Dendritic cell treated with granulocyte-macrophage colony-stimulating factor and Interleukin-4, amounts not matched to agents 40 ng/mL and 50 ng/mL, for 4 days (primary cell): ENCODE measurements at regions of chr11 and their contacts with region 1.

Region 1: GRCh38 chr11:57530596-57531507 is at the start of gene TIMM10:
- H3K4me3 Mint-ChIP-seq: peak within 1 kb of the TSS; percentile 91
- H3K27ac Mint-ChIP-seq: peak within 1 kb of the TSS; percentile 89
- H3K4me1 Mint-ChIP-seq: peaks cover 25% of the 10 kb centered on the region
- H3K27me3 Mint-ChIP-seq: no peaks in the 10 kb centered on the region

Region 2: GRCh38 chr11:57335343-57336110 is 195.3 kb before region 1 on chr11 and contains the start of gene SSRP1:
- intact Hi-C with region 1: loop called (anchors 5 kb)
- H3K4me3 Mint-ChIP-seq: peak within 1 kb of the TSS; percentile 87
- H3K27ac Mint-ChIP-seq: peak within 1 kb of the TSS; percentile 94
- H3K4me1 Mint-ChIP-seq: peaks cover 31% of the 10 kb centered on the region
- H3K27me3 Mint-ChIP-seq: peaks cover 8% of the 10 kb centered on the region

Region 3: DNA sequence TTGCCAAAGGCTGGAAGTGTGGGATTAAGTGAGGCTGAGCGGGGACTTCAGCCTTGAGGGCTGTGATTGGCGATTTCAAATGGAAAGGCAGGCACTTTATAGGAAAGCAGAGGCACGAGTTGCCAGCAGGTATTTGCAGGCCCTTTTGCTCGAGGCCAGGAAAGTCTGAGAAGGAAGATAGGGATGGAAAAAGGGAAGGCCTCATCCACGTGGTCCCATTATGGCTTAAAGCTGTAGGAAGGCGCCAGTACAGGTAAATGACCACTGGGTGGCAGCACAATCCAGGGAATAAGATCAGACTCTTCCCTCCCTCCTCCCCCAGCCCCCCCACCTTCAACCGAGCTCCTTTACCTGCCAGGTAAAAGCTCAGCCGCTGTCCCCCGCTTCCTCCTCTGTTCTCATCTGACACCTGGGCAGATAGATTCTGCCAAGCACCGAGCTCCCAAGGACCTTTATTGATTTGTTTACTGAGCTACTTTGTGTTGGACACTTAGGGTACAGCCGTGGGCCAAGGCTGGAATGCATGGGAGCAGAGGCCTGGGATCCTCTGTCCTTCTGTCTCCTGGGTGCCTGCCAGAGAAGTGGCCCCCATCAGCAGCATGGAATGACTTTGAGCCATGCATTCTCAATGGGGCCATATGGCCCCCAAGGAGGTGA is 185.2 kb before region 1 on chr11:
- intact Hi-C with region 1: loop called (anchors 5 kb)
- H3K4me3 Mint-ChIP-seq: no peak overlapping the region
- H3K27ac Mint-ChIP-seq: no peak overlapping the region
- H3K4me1 Mint-ChIP-seq: peaks cover 8% of the 10 kb centered on the region
- H3K27me3 Mint-ChIP-seq: peaks cover 10% of the 10 kb centered on the region

Region 4: GRCh38 chr11:57456960-57457642 is 73.8 kb before region 1 on chr11:
- intact Hi-C with region 1: loop called (anchors 1 kb)
- H3K4me3 Mint-ChIP-seq: no peak overlapping the region
- H3K27ac Mint-ChIP-seq: no peak overlapping the region
- H3K4me1 Mint-ChIP-seq: peaks cover 31% of the 10 kb centered on the region
- H3K27me3 Mint-ChIP-seq: peaks cover 43% of the 10 kb centered on the region

Region 5: DNA sequence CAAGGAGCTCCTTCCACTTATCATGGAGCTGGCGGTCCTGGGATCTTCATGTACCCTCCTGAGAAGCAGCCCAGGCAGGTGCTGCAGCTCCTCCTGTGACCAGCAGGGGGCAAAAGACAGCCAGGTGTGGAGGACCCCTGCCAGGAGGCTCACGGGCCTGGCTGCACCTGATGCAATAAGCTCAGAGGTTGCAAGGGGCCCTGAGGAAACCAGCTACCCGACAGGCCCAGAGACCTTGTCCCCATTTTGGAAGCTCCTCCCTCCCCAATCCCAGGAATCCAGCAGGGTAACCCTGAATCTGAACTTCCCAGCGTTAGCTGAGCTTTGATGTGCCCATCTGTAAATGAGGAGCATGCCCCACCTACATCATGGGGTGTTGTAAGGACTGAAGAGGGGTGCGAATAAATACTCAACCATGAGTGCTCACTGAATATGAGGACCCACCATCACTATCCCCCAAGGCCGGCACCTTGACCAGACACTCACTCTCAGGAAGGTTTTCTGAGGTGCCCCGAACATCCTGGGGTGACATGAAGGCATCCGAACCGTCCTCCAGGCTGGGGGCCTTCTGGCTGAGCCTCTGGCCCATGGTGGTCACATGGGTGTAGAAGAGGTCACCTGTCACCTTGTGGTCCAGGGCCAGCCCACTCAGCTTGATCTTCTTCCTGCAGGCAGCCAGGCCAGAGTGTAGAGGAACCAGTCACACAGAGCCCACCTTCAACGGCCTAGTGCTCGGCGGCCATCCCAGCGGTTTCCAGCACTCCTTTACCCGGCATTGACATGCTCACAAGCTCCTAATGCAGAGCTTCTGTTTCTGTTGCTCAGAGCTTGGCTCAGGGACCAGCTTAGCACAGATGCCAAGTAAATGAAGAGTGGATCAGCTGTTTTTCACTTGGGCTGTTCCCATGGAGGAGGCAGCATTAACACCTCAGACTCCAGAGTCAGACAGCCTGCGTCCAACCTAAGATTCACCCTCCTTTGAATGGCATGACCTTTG is 37.0 kb before region 1 on chr11:
- intact Hi-C with region 1: loop called (anchors 1 kb)
- H3K4me3 Mint-ChIP-seq: no peak overlapping the region
- H3K27ac Mint-ChIP-seq: no peak overlapping the region
- H3K4me1 Mint-ChIP-seq: no peaks in the 10 kb centered on the region
- H3K27me3 Mint-ChIP-seq: no peaks in the 10 kb centered on the region

Region 6: GRCh38 chr11:57567515-57568329 is 36.9 kb after region 1 on chr11 and contains the start of gene UBE2L6:
- intact Hi-C with region 1: loop called (anchors 2 kb)
- H3K4me3 Mint-ChIP-seq: peak within 1 kb of the TSS; percentile 91
- H3K27ac Mint-ChIP-seq: peak within 1 kb of the TSS; percentile 82
- H3K4me1 Mint-ChIP-seq: peaks cover 68% of the 10 kb centered on the region
- H3K27me3 Mint-ChIP-seq: no peaks in the 10 kb centered on the region

Region 7: GRCh38 chr11:57735619-57736298 is 204.9 kb after region 1 on chr11:
- intact Hi-C with region 1: no loop called
- H3K4me3 Mint-ChIP-seq: no peak overlapping the region
- H3K27ac Mint-ChIP-seq: no peak overlapping the region
- H3K4me1 Mint-ChIP-seq: peaks cover 17% of the 10 kb centered on the region
- H3K27me3 Mint-ChIP-seq: no peaks in the 10 kb centered on the region